ENCODE measurements at regions of chr4 and their contacts with region 1.

Region 1: DNA sequence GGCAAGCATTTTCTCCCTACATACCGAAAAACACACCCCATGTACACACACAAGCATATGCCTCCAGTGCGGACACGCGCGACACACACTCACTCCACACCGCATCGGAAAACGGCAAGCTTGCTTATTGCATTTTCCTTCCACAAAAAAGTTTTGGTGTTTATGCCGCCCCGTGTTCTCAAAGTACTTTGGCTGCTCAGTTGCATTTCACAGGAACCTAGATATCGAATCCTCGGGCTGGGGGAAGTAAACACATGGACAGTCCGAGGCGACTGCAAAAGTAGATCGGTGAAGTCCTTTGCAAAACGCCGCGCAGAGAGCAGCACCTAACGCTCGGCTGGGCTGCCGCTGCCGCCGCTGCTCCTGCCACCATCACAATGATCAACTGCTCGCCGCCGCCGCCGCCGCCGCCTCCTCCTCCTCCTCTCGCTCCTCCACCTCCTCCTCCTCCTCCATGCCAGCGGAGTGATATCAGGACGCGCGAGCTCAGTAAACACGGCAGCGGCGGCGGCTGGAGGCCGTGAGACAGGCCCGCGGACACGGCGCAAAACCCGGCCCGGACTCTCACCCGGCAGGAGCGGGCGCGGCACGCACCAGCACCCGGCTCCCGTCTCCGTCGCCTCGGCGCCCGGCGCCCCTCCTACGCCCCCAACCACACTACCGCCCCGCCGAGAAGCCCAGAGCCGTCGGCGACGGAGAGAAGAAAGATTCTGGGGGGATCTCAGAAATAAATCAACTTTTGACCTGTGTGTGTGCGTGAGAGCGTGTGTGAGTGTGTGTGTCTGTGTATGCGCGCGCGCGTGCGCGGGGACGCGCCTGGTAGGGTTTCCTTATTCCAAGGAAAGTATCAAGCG is at the start of gene MAML3:
- DNase-seq: peak; percentile 97
- ATAC-seq: peak; percentile 76
- total RNA-seq, gene MAML3: 2.4 TPM

Region 2: GRCh38 chr4:139734875-139735380 is 419.0 kb before region 1 on chr4:
- intact Hi-C with region 1: loop called (anchors 10 kb)
- DNase-seq: peak; percentile 93
- ATAC-seq: peak; percentile 96

Region 3: GRCh38 chr4:140049024-140049848 is 104.7 kb before region 1 on chr4:
- intact Hi-C with region 1: loop called (anchors 2 kb)
- DNase-seq: peak; percentile 46
- ATAC-seq: peak; percentile 77

Region 4: DNA sequence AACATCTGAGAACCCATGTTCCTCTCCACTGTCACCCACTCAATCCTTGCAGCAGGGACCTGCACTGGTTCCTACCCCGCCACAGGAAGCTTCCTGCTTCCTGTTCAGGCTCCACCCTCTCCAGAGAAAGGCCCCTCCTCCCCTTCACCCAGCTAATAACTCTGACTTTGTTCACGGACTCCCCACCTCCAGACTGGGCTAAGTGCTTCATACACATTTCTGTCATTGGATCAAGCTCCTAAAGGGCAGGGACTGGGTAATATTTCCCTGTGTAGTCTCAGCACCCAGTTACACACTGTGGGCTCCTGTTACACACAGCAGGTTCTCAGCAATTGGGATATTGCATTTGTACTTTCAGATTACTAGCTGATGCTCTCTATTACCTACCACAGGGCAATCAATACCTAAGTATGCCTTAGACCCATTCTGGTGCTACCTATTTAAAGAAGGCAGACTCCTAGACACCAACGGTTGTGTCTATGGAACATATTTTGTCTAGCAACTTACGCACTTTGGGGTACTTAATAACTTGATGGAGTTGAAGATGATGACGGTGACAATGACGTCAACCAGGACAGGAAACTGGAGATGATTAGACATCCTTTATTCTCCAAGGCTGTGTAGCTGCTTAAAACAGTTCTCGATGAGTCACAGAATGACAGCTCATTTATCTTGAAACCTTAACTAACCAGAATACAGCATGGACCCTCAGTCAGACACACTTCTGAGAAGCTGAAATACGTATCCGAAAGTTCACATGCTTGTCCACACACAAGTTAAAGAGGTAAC is 58.1 kb before region 1 on chr4:
- intact Hi-C with region 1: loop called (anchors 5 kb)
- DNase-seq: peak; percentile 51
- ATAC-seq: no peak

Region 5: DNA sequence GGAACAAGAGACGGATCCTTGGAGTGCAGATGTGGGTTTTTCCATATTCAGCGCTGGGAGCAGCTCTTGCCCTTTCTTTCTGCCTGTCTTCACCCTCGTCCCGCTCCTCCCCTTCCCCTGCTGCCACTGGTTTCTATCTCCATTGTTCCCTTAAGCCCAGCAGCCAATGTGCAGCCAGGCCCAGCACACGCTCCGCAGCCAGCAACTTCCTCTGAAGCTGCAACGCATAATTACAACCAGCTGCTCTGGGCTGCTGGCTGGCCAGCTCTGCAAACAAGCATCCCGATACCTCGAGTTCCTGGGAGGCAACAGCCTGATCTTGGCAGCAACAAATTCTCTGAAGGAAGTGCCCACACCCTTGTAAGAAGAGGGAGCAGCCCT is 83.7 kb after region 1 on chr4:
- intact Hi-C with region 1: loop called (anchors 5 kb)
- DNase-seq: peak; percentile 91
- ATAC-seq: peak; percentile 90

Region 6: GRCh38 chr4:140252742-140253555 is 99.0 kb after region 1 on chr4:
- intact Hi-C with region 1: loop called (anchors 5 kb)
- DNase-seq: peak; percentile 87
- ATAC-seq: peak; percentile 94

Measured in Right ventricle myocardium superior (tissue), 1 donor.